CD4-positive, alpha-beta memory T cell (primary cell): ENCODE measurements at regions of chr11 and their contacts with region 1.

Region 1: GRCh38 chr11:78645226-78646202 is 70.8 kb upstream of the NARS2 start:
- DNase-seq: peak; percentile 23 to 48 (median 33)
- H3K4me3 ChIP-seq: no peak overlapping the region
- H3K4me3 Mint-ChIP-seq: peak overlapping the region in 5 of 8 donors; percentile 49 to 88 (median 73)
- H3K27ac ChIP-seq: no peak overlapping the region
- H3K27ac Mint-ChIP-seq: peak overlapping the region in 1 of 7 donors; percentile 17
- H3K4me1 ChIP-seq: no peaks in the 10 kb centered on the region
- H3K4me1 Mint-ChIP-seq: peaks cover 6 to 16% (median 11%) of the 10 kb centered on the region in 4 donors
- H3K27me3 ChIP-seq: no peaks in the 10 kb centered on the region
- H3K27me3 Mint-ChIP-seq: peaks cover 2 to 3% of the 10 kb centered on the region in 2 donors

Region 2: GRCh38 chr11:78659326-78660270 is 14.1 kb after region 1 on chr11:
- CTCF ChIA-PET with region 1: interaction called, 44 read pairs
- POLR2A ChIA-PET with region 1: no interaction called
- intact Hi-C with region 1: no loop called
- DNase-seq: no peak
- H3K4me3 ChIP-seq: no peak overlapping the region
- H3K4me3 Mint-ChIP-seq: no peak overlapping the region
- H3K27ac ChIP-seq: no peak overlapping the region
- H3K27ac Mint-ChIP-seq: no peak overlapping the region
- H3K4me1 ChIP-seq: no peaks in the 10 kb centered on the region
- H3K4me1 Mint-ChIP-seq: no peaks in the 10 kb centered on the region
- H3K27me3 ChIP-seq: no peaks in the 10 kb centered on the region
- H3K27me3 Mint-ChIP-seq: peaks cover 0 to 2% of the 10 kb centered on the region in 2 donors

Region 3: GRCh38 chr11:78664636-78665035 is 19.1 kb after region 1 on chr11:
- CTCF ChIA-PET with region 1: interaction called, 26 read pairs
- POLR2A ChIA-PET with region 1: no interaction called
- intact Hi-C with region 1: no loop called
- DNase-seq: no peak
- H3K4me3 ChIP-seq: no peak overlapping the region
- H3K4me3 Mint-ChIP-seq: no peak overlapping the region
- H3K27ac ChIP-seq: no peak overlapping the region
- H3K27ac Mint-ChIP-seq: no peak overlapping the region
- H3K4me1 ChIP-seq: no peaks in the 10 kb centered on the region
- H3K4me1 Mint-ChIP-seq: no peaks in the 10 kb centered on the region
- H3K27me3 ChIP-seq: no peaks in the 10 kb centered on the region
- H3K27me3 Mint-ChIP-seq: no peaks in the 10 kb centered on the region

Region 4: GRCh38 chr11:78676026-78676557 is 30.6 kb after region 1 on chr11:
- CTCF ChIA-PET with region 1: interaction called, 10 read pairs
- POLR2A ChIA-PET with region 1: no interaction called
- intact Hi-C with region 1: no loop called
- DNase-seq: no peak
- H3K4me3 ChIP-seq: no peak overlapping the region
- H3K4me3 Mint-ChIP-seq: peak overlapping the region in 1 of 8 donors; percentile 52
- H3K27ac ChIP-seq: no peak overlapping the region
- H3K27ac Mint-ChIP-seq: no peak overlapping the region
- H3K4me1 ChIP-seq: no peaks in the 10 kb centered on the region
- H3K4me1 Mint-ChIP-seq: no peaks in the 10 kb centered on the region
- H3K27me3 ChIP-seq: no peaks in the 10 kb centered on the region
- H3K27me3 Mint-ChIP-seq: no peaks in the 10 kb centered on the region

Region 5: GRCh38 chr11:79076526-79077115 is 431.1 kb after region 1 on chr11:
- CTCF ChIA-PET with region 1: interaction called, 10 read pairs
- POLR2A ChIA-PET with region 1: no interaction called
- intact Hi-C with region 1: no loop called
- DNase-seq: peak in 1 of 5 donors; percentile 6
- H3K4me3 ChIP-seq: no peak overlapping the region
- H3K4me3 Mint-ChIP-seq: no peak overlapping the region
- H3K27ac ChIP-seq: no peak overlapping the region
- H3K27ac Mint-ChIP-seq: no peak overlapping the region
- H3K4me1 ChIP-seq: no peaks in the 10 kb centered on the region
- H3K4me1 Mint-ChIP-seq: no peaks in the 10 kb centered on the region
- H3K27me3 ChIP-seq: no peaks in the 10 kb centered on the region
- H3K27me3 Mint-ChIP-seq: no peaks in the 10 kb centered on the region